Astrocyte of the cerebellum (primary cell): ENCODE measurements at regions of chr7 and their contacts with region 1.

Region 1: GRCh38 chr7:118711688-118712087 is 487.2 kb downstream of the ANKRD7 start:
- DNase-seq: no peak
- H3K4me3 ChIP-seq: no peak overlapping the region
- CTCF ChIP-seq: no peak

Region 2: GRCh38 chr7:118781331-118781730 is 69.6 kb after region 1 on chr7:
- in situ Hi-C with region 1: loop called (anchors 5 kb)
- DNase-seq: no peak
- H3K4me3 ChIP-seq: no peak overlapping the region
- CTCF ChIP-seq: no peak

Region 3: GRCh38 chr7:119812737-119813136 is 1101.0 kb after region 1 on chr7:
- in situ Hi-C with region 1: no loop called
- DNase-seq: no peak
- H3K4me3 ChIP-seq: no peak overlapping the region
- CTCF ChIP-seq: no peak